ENCODE measurements at regions of chr15 and their contacts with region 1.

Region 1: DNA sequence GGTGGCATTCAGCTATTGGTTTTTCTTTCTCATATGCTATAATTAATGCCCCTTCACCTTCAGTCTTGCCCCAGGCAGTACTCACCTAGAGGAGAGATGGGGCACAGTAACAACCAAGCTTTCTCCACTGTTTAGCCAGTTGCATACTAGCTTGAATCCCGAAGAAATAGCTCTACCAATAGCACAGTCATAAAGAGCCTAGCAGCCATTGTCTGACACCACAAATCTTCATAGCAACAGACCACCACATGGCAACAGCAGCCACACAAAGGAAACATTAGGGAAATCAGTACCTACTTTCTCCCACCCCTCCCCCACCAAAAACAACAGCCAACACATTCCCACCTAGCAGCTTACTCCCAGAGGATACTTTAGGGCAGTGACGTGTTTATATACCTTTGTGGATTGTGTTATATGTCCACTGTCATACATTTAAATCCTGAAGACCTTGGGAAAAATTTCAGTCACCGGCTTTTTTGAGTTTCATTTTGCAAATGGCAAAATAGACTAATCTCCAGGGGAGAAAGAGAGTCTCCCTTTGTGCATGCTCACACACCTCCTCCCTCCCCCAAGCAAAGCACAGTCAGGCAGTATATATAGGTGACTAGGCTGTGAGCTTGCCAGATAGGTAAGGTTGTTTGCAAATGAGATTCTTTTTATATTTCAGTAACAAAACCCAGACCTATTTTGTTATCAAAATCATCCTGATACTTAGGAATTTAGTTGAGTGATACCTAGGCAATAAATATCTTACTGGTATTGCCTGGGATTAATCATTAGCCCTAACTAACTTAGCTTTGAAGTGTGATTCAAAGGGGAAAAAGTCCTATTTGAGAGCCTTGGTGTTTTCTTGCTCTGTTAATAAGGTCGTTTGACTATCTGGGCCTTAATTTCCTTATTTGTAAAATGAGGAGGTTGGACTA is 140.6 kb downstream of the RBPMS2 start:
- DNase-seq: no peak
- H3K4me3 Mint-ChIP-seq: no peak overlapping the region
- H3K27ac Mint-ChIP-seq: peak overlapping the region; percentile 3
- H3K4me1 Mint-ChIP-seq: peaks cover 14% of the 10 kb centered on the region
- H3K27me3 Mint-ChIP-seq: no peaks in the 10 kb centered on the region
- CTCF ChIP-seq: no peak

Region 2: GRCh38 chr15:64619880-64620839 is 14.7 kb before region 1 on chr15:
- CTCF ChIA-PET with region 1: no interaction called
- POLR2A ChIA-PET with region 1: interaction called, 15 read pairs
- intact Hi-C with region 1: no loop called
- DNase-seq: peak; percentile 71
- H3K4me3 Mint-ChIP-seq: peak overlapping the region; percentile 34
- H3K27ac Mint-ChIP-seq: peak overlapping the region; percentile 55
- H3K4me1 Mint-ChIP-seq: peaks cover 22% of the 10 kb centered on the region
- H3K27me3 Mint-ChIP-seq: no peaks in the 10 kb centered on the region
- CTCF ChIP-seq: no peak

Region 3: GRCh38 chr15:64717735-64718495 is 83.1 kb after region 1 on chr15:
- CTCF ChIA-PET with region 1: no interaction called
- POLR2A ChIA-PET with region 1: no interaction called
- intact Hi-C with region 1: no loop called
- DNase-seq: no peak
- H3K4me3 Mint-ChIP-seq: no peak overlapping the region
- H3K27ac Mint-ChIP-seq: no peak overlapping the region
- H3K4me1 Mint-ChIP-seq: no peaks in the 10 kb centered on the region
- H3K27me3 Mint-ChIP-seq: no peaks in the 10 kb centered on the region
- CTCF ChIP-seq: no peak

Region 4: DNA sequence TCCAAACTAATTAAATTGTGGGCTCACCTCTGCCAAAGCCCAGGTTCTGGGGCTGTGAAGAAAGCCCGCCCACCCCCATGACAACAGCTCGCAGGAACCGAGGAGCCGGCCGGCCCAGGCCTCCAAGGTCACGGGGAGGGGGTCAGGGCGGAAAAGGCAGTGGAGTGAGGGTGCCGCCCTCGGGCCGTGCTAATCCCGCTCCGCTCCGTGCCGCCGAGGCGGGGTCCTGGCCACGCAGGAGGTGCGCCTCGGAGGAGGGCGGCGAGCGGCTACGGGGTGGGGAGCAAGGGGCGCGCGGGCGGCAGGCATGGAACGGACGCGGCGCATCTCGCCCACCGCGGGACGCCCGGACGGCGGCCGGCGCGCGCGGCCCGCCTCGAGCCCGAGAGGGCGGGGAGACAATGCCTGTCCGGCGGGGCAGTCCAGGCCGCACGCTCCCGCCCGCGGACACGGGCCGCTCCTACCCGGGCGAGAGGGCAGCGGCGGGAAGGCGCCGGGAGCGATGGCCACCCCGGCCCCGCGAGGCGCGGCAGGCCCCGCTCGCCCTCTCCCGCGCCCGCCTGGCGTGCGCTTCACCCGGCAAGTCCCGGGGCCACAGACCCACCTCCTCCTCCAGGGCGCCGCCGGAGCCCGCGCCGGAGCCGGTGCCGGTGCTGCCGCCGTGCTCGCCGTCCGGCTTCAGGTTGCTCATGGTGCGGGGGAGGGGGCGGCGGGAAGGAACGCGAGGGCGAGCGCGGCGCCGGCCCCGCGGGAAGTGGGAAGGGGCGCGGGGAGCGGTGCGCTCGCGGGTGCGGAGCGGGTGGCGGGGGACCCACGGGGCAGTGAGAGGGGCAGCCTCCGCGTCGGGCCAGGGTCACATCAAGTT is 140.0 kb after region 1 on chr15:
- CTCF ChIA-PET with region 1: no interaction called
- POLR2A ChIA-PET with region 1: no interaction called
- intact Hi-C with region 1: no loop called
- DNase-seq: no peak
- H3K4me3 Mint-ChIP-seq: peak overlapping the region; percentile 70
- H3K27ac Mint-ChIP-seq: no peak overlapping the region
- H3K4me1 Mint-ChIP-seq: no peaks in the 10 kb centered on the region
- H3K27me3 Mint-ChIP-seq: peaks cover 11% of the 10 kb centered on the region
- CTCF ChIP-seq: no peak

Measured in MCF 10A (cell line).